HEK293 (cell line): ENCODE measurements at regions of chr3 and their contacts with region 1.

Region 1: DNA sequence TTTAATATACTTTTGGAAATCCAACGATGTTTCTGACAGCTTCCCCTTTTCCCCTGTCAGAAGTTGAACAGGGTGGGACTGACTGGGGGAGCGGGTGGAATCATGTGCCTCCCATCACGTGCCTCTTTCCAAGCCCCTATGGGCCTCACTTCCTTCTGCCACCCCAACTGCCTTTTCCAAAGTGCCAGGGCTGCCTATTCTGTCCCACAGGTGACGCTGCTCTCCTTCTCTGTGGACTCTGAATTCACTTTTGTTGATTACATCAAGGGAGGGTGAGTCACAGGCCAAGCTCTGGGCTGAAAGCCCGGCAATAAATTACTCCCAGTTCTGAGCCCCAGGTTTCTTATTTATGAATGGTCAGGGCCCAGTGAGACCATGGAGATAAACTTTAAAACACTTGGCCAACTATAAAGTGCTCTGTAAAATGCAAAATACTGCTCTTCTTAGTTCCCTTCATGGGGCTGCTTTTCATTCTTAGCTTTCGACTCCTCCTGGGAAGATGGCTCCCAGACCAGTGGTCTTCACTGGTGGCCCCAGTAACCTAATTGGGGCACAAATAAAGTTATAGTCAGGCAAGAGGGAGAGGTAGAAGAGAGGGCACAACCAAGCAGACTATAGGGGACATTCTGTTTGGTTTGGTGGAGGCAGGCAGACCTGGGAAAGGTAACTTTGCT is 12.3 kb downstream of the CPNE9 start:
- H3K4me3 ChIP-seq: no peak overlapping the region
- H3K27ac ChIP-seq: no peak overlapping the region
- H3K4me1 ChIP-seq: no peaks in the 10 kb centered on the region
- CTCF ChIP-seq: peak; percentile 79

Region 2: GRCh38 chr3:9503283-9503682 is 212.6 kb before region 1 on chr3:
- CTCF ChIA-PET with region 1: interaction called, 15 read pairs
- POLR2A ChIA-PET with region 1: no interaction called
- H3K4me3 ChIP-seq: no peak overlapping the region
- H3K27ac ChIP-seq: no peak overlapping the region
- H3K4me1 ChIP-seq: no peaks in the 10 kb centered on the region
- CTCF ChIP-seq: peak; percentile 73

Region 3: DNA sequence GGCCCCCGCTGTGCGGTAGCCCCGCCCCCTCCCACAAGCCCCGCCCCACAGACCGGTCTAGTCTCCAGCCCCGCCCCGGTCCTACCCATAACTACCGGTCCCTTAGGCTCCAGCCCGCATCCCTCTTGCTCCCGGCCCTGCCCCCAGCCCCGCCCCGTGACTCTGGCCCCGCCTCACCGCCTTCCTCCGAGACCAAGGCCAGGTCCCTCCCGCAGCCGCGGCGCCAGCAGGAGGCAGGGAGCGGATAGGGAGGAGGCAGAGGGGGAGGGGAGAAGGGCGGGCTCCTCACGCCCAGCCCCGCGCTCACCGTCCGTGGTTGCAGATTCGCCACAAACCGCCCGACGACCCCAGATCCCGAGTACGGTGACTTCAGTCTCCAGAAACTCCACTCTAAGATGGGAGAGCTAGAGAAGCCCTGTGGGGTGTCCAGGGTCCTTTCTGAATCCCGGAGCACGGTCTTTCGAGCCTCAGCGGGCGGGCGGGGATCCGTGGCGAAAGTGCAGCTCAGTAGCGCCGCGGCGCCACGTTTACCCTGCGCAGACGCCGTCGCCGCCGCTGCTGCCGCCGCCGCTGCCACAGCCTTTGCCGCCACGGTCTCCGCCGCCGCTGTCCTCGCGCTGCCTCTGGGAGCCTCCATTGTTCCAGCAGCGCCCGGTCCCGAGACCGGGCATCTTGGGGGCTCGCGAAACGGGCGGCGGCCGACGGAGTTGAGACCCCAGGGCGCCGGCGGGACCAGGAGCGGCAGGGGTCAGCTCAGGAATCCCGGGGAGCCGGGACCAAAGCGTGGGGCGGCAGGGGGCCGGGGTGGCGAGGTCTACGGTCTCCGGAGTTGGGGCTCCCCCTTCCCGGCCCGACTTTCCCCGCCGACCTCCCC is 15.5 kb after region 1 on chr3 and contains the start of gene BRPF1:
- CTCF ChIA-PET with region 1: interaction called, 15 read pairs
- POLR2A ChIA-PET with region 1: interaction called, 4 read pairs
- H3K4me3 ChIP-seq: peak within 1 kb of the TSS; percentile 87
- H3K27ac ChIP-seq: peak within 1 kb of the TSS; percentile 100
- H3K4me1 ChIP-seq: peaks cover 7% of the 10 kb centered on the region; the same call in 1 of the 2 replicates
- CTCF ChIP-seq: peak; percentile 42; the same call in 1 of the 2 replicates